GM10248 (cell line): ENCODE measurements at regions of chr19 and their contacts with region 1.

Region 1: DNA sequence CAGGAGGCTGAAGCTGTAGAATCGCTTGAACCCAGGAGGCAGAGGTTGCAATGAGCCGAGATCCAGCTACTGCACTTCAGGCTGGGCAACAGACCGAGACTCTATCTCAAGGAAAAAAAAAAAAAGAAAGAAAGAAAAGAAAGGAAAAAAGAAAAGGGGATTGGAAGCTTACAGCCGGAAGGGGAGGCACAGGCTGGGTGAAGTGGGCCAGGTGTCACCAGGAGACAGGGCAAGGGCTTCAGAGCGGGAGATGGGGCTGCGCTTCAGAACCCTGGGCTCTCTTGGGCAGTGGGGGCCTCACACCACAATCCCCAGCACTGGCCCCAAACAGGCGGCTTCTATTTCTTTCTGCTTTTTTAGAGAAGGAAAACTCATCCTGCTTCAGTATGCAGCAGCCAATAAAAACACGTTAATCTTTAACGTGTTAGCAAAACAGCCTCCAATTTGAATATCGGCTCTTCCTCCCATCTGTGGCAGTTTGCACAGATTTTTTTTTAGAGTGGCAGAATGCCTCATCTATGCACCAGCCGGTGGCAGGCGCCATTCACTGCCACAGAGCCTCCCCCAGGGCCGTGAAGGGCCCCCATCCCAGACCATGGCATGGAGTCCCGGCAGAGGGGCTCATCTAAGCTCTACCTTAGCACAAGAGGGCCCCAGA is 46.6 kb upstream of the C19orf12 start:
- DNase-seq: no peak
- CTCF ChIP-seq: no peak

Region 2: GRCh38 chr19:29750001-29750400 is 11.7 kb before region 1 on chr19:
- CTCF ChIA-PET with region 1: interaction called, 17 read pairs
- POLR2A ChIA-PET with region 1: no interaction called
- DNase-seq: no peak
- CTCF ChIP-seq: no peak

Region 3: GRCh38 chr19:29779921-29780320 is 18.2 kb after region 1 on chr19:
- CTCF ChIA-PET with region 1: interaction called, 21 read pairs
- POLR2A ChIA-PET with region 1: no interaction called
- DNase-seq: no peak
- CTCF ChIP-seq: no peak

Region 4: DNA sequence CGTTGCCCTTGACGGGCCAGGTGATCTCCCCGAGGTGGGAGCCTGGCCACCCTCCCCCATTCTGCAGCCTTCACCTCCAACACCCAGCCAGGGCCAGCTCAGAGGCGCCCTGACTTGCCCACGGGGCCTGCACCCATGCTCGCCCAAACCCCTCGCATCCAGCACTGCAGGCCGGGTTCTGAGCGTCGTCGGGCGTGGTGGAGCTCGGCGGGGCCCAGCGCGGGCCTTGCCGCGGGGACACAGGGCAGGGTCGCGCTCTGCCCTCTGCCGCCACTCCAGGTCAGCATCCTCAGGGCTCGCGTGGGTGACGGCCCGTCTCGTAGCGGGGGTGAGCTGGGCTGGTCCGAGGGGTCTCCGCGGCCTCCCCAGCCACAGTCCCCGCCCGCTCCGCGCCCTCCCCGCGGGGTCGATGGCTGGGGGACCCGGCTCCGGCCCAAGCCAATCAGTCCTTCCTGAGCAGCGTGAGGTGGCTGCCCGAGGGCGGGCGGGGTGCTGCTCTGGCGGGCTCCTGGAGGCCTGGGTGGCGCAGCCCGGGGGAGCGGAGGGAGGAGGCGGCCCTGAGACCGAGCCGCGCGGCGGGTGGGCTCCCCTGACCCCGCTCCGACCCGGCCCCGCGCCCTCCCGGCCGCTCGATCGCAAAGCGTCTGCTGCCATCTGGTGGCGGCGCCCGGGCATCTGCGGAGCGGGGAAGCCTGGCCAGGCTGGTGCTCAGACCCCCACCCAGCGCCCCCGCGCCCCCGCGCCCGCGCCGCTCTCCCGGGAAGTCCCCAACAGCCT is 111.5 kb after region 1 on chr19:
- CTCF ChIA-PET with region 1: interaction called, 80 read pairs
- POLR2A ChIA-PET with region 1: no interaction called
- DNase-seq: peak; percentile 85
- CTCF ChIP-seq: peak; percentile 80